OCI-LY7 (cell line): ENCODE measurements at regions of chr11 and their contacts with region 1.

Region 1: DNA sequence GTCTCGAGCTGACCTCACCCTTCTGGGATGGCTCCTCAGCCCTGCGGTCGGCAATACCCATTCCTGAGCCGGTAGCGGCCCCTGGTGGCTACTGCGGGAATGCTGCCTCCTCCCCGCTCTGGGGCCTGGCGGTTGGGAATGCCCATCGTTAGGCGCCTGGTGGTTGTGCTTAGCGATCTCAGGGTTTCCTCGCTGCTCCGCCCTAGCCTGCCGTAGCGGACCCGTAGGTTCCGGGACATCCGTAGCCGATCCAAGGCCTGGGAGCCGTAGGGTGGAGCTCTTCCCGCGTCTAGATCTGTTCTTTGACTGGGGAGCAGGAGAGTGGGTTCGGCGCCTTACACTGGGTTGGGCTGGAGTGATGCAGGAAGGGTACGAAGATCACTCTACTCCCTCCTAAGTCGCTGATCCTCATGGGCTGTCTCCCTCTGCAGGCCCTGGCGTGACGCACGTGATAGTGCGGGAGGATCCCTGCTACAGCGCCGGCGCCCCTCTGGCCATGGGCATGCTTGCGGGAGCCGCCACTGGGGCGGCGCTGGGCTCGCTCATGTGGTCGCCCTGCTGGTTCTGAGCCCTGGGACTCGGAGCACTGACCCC is 14.8 kb downstream of the PLEKHB1 start:
- DNase-seq: peak; percentile 73
- H3K4me3 ChIP-seq: peak overlapping the region; percentile 35
- H3K27ac ChIP-seq: no peak overlapping the region
- H3K4me1 ChIP-seq: no peaks in the 10 kb centered on the region
- CTCF ChIP-seq: peak; percentile 92

Region 2: GRCh38 chr11:73350908-73351636 is 310.1 kb before region 1 on chr11:
- CTCF ChIA-PET with region 1: interaction called, 4 read pairs
- POLR2A ChIA-PET with region 1: no interaction called
- intact Hi-C with region 1: loop called (anchors 1 kb)
- DNase-seq: peak; percentile 78
- H3K4me3 ChIP-seq: no peak overlapping the region
- H3K27ac ChIP-seq: no peak overlapping the region
- H3K4me1 ChIP-seq: no peaks in the 10 kb centered on the region
- CTCF ChIP-seq: peak; percentile 99

Region 3: DNA sequence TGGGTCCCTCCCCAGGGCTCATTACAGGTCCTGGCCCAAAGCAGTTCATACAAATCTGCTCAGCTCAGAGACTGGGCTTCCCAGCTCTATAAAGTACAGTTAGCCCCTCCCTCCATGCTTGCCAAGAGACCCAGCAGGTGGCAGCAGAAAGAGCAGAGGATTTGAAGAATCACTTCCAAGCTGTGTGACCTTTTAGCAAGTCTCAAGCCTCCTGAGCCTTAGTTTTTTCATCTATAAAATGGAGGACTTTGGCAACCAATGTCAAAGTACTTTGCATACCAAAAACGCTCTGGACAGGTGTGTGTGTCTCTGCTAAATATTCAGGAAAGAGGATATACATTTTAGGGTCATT is 258.3 kb before region 1 on chr11:
- CTCF ChIA-PET with region 1: interaction called, 3 read pairs
- POLR2A ChIA-PET with region 1: interaction called, 3 read pairs
- intact Hi-C with region 1: loop called (anchors 2 kb)
- DNase-seq: peak; percentile 51
- H3K4me3 ChIP-seq: no peak overlapping the region
- H3K27ac ChIP-seq: no peak overlapping the region
- H3K4me1 ChIP-seq: no peaks in the 10 kb centered on the region
- CTCF ChIP-seq: peak; percentile 72

Region 4: GRCh38 chr11:73414977-73415651 is 246.0 kb before region 1 on chr11:
- CTCF ChIA-PET with region 1: no interaction called
- POLR2A ChIA-PET with region 1: no interaction called
- intact Hi-C with region 1: loop called (anchors 5 kb)
- DNase-seq: no peak
- H3K4me3 ChIP-seq: no peak overlapping the region
- H3K27ac ChIP-seq: no peak overlapping the region
- H3K4me1 ChIP-seq: no peaks in the 10 kb centered on the region
- CTCF ChIP-seq: no peak

Region 5: GRCh38 chr11:73478738-73479347 is 182.3 kb before region 1 on chr11:
- CTCF ChIA-PET with region 1: no interaction called
- POLR2A ChIA-PET with region 1: interaction called, 3 read pairs
- intact Hi-C with region 1: loop called (anchors 1 kb)
- DNase-seq: peak; percentile 21
- H3K4me3 ChIP-seq: no peak overlapping the region
- H3K27ac ChIP-seq: no peak overlapping the region
- H3K4me1 ChIP-seq: no peaks in the 10 kb centered on the region
- CTCF ChIP-seq: peak; percentile 94

Region 6: DNA sequence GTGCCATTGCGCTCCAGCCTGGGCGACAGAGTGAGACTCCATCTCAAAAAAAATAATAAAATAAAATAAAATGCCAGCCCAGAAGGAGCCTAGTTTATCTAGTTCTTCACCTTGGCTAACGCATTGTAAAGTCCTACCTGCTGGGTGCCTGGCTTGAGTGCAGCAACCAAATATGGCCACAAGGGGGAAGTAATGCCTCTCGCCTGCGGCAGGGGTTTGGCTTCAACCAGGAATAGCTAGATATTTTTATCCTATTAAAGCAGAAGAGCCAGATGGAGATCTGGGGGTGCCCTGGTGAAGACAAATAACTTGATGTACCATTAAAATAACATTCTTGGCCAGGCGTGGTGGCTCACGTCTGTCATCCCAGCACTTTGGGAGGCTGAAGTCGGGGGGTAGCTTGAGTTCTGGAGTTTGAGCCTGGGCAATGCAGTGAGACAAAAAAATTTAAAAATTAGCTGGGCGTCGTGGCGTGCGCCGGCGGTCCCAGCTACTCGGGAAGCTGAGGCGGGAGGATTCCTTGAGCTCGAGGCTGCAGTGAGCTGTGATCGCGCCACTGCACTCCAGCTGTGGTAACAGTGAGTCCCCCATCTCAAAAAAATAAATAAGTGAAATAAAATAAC is 35.3 kb before region 1 on chr11:
- CTCF ChIA-PET with region 1: interaction called, 3 read pairs
- POLR2A ChIA-PET with region 1: interaction called, 4 read pairs
- intact Hi-C with region 1: loop called (anchors 1 kb)
- DNase-seq: peak; percentile 73
- H3K4me3 ChIP-seq: no peak overlapping the region
- H3K27ac ChIP-seq: no peak overlapping the region
- H3K4me1 ChIP-seq: no peaks in the 10 kb centered on the region
- CTCF ChIP-seq: peak; percentile 88